Adrenal gland (tissue), 19 donors: ENCODE measurements at regions of chr5 and their contacts with region 1.

Region 1: GRCh38 chr5:52909192-52909591 is 80.0 kb upstream of the ITGA2 start:
- DNase-seq: peak in 4 of 7 donors; percentile 47 to 66 (median 60)
- H3K4me3 ChIP-seq: no peak overlapping the region
- H3K27ac ChIP-seq: peak overlapping the region; percentile 36 to 72 (median 57)
- H3K4me1 ChIP-seq: peaks cover 11 to 35% of the 10 kb centered on the region in 2 donors
- H3K27me3 ChIP-seq: no peaks in the 10 kb centered on the region
- CTCF ChIP-seq: no peak
- POLR2A ChIP-seq: peak in 1 of 2 donors; percentile 11

Region 2: DNA sequence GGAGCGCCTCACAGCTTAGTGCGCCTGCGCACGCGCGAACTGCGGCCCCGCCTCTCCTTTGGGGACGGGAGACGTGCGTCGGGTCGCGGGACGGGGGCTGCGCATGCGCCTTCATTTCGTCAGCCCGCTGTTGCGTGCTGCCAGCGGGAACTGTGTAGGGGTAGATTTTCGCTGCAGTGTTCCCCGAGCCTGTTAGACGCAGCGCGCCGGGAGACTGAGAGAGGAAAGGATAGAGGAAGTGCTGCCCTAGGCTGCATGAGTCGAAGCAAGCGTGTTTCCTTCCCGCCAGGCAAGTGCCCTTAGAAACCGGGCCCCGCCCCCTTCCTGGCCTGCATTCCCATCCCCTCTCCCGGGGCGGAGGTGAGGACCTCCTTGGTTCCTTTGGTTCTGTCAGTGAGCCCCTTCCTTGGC is 109.2 kb before region 1 on chr5:
- intact Hi-C with region 1: loop called in 1 of 2 experiments (anchors 10 kb)
- DNase-seq: peak; percentile 95 to 97 (median 96)
- H3K4me3 ChIP-seq: peak overlapping the region; percentile 44 to 78 (median 72)
- H3K27ac ChIP-seq: peak overlapping the region; percentile 94 to 99 (median 97)
- H3K4me1 ChIP-seq: peaks cover 38 to 80% of the 10 kb centered on the region in 2 donors
- H3K27me3 ChIP-seq: no peaks in the 10 kb centered on the region
- CTCF ChIP-seq: no peak
- POLR2A ChIP-seq: peak; percentile 69 to 91